Mammary epithelial cell (primary cell): ENCODE measurements at regions of chr2 and their contacts with region 1.

Region 1: DNA sequence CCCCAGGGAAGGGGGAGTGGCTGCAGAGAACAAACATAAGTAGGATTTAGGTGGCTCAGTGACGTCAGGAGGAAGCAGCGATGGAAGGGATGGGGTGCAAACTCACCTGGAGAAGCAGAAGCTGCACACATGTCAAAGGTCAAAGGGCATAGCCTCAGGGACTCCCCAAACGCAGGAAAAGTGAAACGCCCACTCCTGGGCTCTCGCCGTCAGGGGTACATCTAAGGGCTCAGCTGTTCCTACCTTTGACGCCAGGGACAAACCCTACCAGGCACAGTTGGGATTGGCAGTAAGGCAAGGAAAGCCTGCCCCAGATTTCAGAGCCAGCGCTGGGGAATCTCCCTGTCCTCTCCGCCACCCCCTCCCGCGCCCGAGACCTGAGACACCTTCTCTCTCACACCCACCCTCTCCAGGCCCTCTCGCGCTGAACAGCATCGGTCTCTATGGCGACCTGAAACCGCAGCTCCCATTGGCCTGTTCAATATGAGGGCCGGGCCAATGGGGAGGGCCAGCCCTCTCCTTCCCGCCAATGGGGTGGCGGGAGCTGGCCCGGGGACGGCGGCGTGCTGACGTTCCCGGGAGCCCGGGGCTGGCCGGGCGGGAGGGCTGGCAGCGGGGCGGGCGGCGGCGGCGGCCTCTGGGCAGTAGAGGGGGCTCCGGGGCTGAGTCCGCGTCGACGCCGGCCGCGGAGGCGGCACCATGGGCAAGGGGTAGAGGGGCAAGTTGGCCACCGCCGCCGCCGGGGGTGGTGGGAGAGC is at the starts of genes CCDC148 and PKP4:
- DNase-seq: peak; percentile 94
- H3K4me3 ChIP-seq: peak within 1 kb of the TSS; percentile 77 to 86 (median 86)
- H3K27ac ChIP-seq: peak within 1 kb of the TSS; percentile 74
- H3K4me1 ChIP-seq: peaks cover 22% of the 10 kb centered on the region
- H3K27me3 ChIP-seq: no peaks in the 10 kb centered on the region
- CTCF ChIP-seq: peak in 1 of 2 donors; percentile 23
- total RNA-seq, gene CCDC148: 0.71 to 1.3 TPM
- total RNA-seq, gene PKP4: 64.8 to 82.6 TPM

Region 2: GRCh38 chr2:158034199-158034866 is 422.2 kb before region 1 on chr2:
- CTCF ChIA-PET with region 1: no interaction called
- dilution Hi-C with region 1: no loop called
- in situ Hi-C with region 1: no loop called
- intact Hi-C with region 1: loop called (anchors 2 kb)
- DNase-seq: peak; percentile 43
- H3K4me3 ChIP-seq: no peak overlapping the region
- H3K27ac ChIP-seq: no peak overlapping the region
- H3K4me1 ChIP-seq: no peaks in the 10 kb centered on the region
- H3K27me3 ChIP-seq: peaks cover 3% of the 10 kb centered on the region
- CTCF ChIP-seq: peak; percentile 27 to 65

Region 3: GRCh38 chr2:158473719-158474392 is 17.4 kb after region 1 on chr2:
- CTCF ChIA-PET with region 1: no interaction called
- dilution Hi-C with region 1: no loop called
- in situ Hi-C with region 1: no loop called
- intact Hi-C with region 1: no loop called
- DNase-seq: no peak
- H3K4me3 ChIP-seq: no peak overlapping the region
- H3K27ac ChIP-seq: no peak overlapping the region
- H3K4me1 ChIP-seq: peaks cover 6% of the 10 kb centered on the region
- H3K27me3 ChIP-seq: no peaks in the 10 kb centered on the region
- CTCF ChIP-seq: no peak

Region 4: GRCh38 chr2:158497486-158497885 is 41.0 kb after region 1 on chr2:
- CTCF ChIA-PET with region 1: no interaction called
- dilution Hi-C with region 1: no loop called
- in situ Hi-C with region 1: no loop called
- intact Hi-C with region 1: loop called (anchors 5 kb)
- DNase-seq: peak; percentile 81
- H3K4me3 ChIP-seq: no peak overlapping the region
- H3K27ac ChIP-seq: no peak overlapping the region
- H3K4me1 ChIP-seq: peaks cover 20% of the 10 kb centered on the region
- H3K27me3 ChIP-seq: no peaks in the 10 kb centered on the region
- CTCF ChIP-seq: no peak

Region 5: DNA sequence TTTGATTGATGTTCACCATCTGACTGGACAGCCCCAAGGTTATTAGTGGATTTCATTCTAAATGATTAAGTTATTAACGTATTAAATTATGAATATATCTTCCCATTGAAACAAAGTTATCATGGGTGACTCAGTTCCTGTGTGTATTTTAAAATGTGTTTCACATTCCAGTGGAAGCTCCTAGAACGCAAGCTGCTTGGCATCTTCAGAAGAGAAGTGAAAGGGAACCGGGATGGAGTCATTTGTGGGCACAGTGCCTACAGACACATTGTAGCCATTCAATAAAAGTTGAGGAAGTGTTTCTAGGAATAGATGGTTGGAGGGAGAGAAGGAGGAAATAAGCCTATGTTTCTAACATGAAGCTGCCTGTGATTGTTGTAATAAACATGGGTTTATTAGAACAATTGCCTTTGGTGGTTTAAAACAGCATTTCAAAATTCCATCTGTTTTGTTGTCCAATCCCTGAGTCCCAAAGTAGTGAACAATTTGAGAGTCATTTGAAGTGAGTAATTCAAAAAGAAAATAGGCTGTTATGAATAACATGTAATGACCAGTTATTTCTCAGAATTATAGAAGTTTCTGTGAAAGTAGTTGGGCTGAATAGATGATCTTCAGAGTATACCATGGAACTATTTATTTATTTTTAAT is 143.8 kb after region 1 on chr2:
- CTCF ChIA-PET with region 1: no interaction called
- dilution Hi-C with region 1: no loop called
- in situ Hi-C with region 1: no loop called
- intact Hi-C with region 1: loop called (anchors 5 kb)
- DNase-seq: peak; percentile 92
- H3K4me3 ChIP-seq: peak overlapping the region in 1 of 3 experiments; percentile 12
- H3K27ac ChIP-seq: peak overlapping the region; percentile 81
- H3K4me1 ChIP-seq: peaks cover 32% of the 10 kb centered on the region
- H3K27me3 ChIP-seq: no peaks in the 10 kb centered on the region
- CTCF ChIP-seq: no peak

Region 6: DNA sequence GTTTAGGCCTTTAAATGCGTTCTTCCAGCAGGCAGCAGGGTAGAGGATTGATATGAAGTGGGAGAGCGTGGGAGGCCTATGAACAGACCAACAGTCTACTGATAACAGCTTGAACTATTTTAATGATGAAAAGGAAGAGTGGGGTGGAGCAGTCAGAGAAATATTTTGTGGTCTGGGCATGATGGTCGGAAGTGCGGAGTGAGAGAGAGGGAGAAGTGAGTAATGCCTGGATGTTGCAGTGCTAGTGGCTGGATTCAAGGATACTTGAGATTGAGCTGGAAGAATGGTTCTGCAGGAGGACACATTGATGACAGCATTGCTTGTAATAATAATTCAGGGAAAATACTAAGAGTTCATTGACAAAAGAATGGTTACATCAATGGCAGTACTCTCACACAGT is 187.7 kb after region 1 on chr2:
- CTCF ChIA-PET with region 1: no interaction called
- dilution Hi-C with region 1: no loop called
- in situ Hi-C with region 1: loop called in 1 of 2 experiments (anchors 25 kb)
- intact Hi-C with region 1: no loop called
- DNase-seq: no peak
- H3K4me3 ChIP-seq: no peak overlapping the region
- H3K27ac ChIP-seq: no peak overlapping the region
- H3K4me1 ChIP-seq: no peaks in the 10 kb centered on the region
- H3K27me3 ChIP-seq: no peaks in the 10 kb centered on the region
- CTCF ChIP-seq: no peak